ENCODE measurements at regions of chr1 and their contacts with region 1.

Region 1: GRCh38 chr1:67005068-67005467 is 48.9 kb downstream of the SLC35D1 start:
- DNase-seq: no peak
- H3K4me3 ChIP-seq: no peak overlapping the region
- H3K4me3 Mint-ChIP-seq: no peak overlapping the region
- H3K27ac ChIP-seq: no peak overlapping the region
- H3K27ac Mint-ChIP-seq: no peak overlapping the region
- H3K4me1 ChIP-seq: no peaks in the 10 kb centered on the region
- H3K4me1 Mint-ChIP-seq: no peaks in the 10 kb centered on the region
- H3K27me3 ChIP-seq: no peaks in the 10 kb centered on the region
- H3K27me3 Mint-ChIP-seq: no peaks in the 10 kb centered on the region
- CTCF ChIP-seq: no peak

Region 2: GRCh38 chr1:67041841-67042503 is 36.9 kb after region 1 on chr1:
- intact Hi-C with region 1: no loop called
- DNase-seq: no peak
- H3K4me3 ChIP-seq: no peak overlapping the region
- H3K4me3 Mint-ChIP-seq: no peak overlapping the region
- H3K27ac ChIP-seq: no peak overlapping the region
- H3K27ac Mint-ChIP-seq: no peak overlapping the region
- H3K4me1 ChIP-seq: no peaks in the 10 kb centered on the region
- H3K4me1 Mint-ChIP-seq: no peaks in the 10 kb centered on the region
- H3K27me3 ChIP-seq: no peaks in the 10 kb centered on the region
- H3K27me3 Mint-ChIP-seq: no peaks in the 10 kb centered on the region
- CTCF ChIP-seq: no peak

Region 3: DNA sequence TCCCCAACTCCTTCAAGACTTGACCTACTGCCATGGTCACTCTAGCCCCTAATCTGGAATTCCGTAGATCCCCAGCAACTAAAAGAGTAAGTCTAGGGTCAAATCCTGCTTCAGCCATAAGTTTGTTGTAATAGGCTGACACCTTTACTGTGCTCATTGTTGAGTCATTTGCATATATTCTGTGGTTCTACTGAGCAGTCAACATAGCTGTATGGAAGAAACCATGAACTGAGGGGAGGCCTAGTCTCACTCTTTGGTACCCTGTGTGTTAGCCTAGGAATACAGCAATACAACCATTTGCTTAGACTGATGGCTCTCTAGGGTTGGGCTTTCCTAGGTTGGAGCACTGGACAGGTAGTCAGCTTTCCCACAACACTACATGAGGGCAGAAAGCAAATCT is 72.5 kb after region 1 on chr1:
- intact Hi-C with region 1: no loop called
- DNase-seq: no peak
- H3K4me3 ChIP-seq: no peak overlapping the region
- H3K4me3 Mint-ChIP-seq: no peak overlapping the region
- H3K27ac ChIP-seq: no peak overlapping the region
- H3K27ac Mint-ChIP-seq: no peak overlapping the region
- H3K4me1 ChIP-seq: no peaks in the 10 kb centered on the region
- H3K4me1 Mint-ChIP-seq: no peaks in the 10 kb centered on the region
- H3K27me3 ChIP-seq: no peaks in the 10 kb centered on the region
- H3K27me3 Mint-ChIP-seq: peaks cover 0 to 4% (median 2%) of the 10 kb centered on the region in 3 donors
- CTCF ChIP-seq: no peak

Region 4: GRCh38 chr1:67162957-67163356 is 157.9 kb after region 1 on chr1:
- intact Hi-C with region 1: no loop called
- DNase-seq: no peak
- H3K4me3 ChIP-seq: no peak overlapping the region
- H3K4me3 Mint-ChIP-seq: no peak overlapping the region
- H3K27ac ChIP-seq: no peak overlapping the region
- H3K27ac Mint-ChIP-seq: no peak overlapping the region
- H3K4me1 ChIP-seq: no peaks in the 10 kb centered on the region
- H3K4me1 Mint-ChIP-seq: no peaks in the 10 kb centered on the region
- H3K27me3 ChIP-seq: no peaks in the 10 kb centered on the region
- H3K27me3 Mint-ChIP-seq: peaks cover 2 to 6% (median 5%) of the 10 kb centered on the region in 3 donors
- CTCF ChIP-seq: no peak

Region 5: GRCh38 chr1:67489643-67490042 is 484.6 kb after region 1 on chr1:
- intact Hi-C with region 1: no loop called
- DNase-seq: no peak
- H3K4me3 ChIP-seq: no peak overlapping the region
- H3K4me3 Mint-ChIP-seq: no peak overlapping the region
- H3K27ac ChIP-seq: no peak overlapping the region
- H3K27ac Mint-ChIP-seq: peak overlapping the region in 1 of 7 donors; percentile 16
- H3K4me1 ChIP-seq: no peaks in the 10 kb centered on the region
- H3K4me1 Mint-ChIP-seq: no peaks in the 10 kb centered on the region
- H3K27me3 ChIP-seq: no peaks in the 10 kb centered on the region
- H3K27me3 Mint-ChIP-seq: peaks cover 0 to 4% (median 0%) of the 10 kb centered on the region in 3 donors
- CTCF ChIP-seq: no peak

Region 6: DNA sequence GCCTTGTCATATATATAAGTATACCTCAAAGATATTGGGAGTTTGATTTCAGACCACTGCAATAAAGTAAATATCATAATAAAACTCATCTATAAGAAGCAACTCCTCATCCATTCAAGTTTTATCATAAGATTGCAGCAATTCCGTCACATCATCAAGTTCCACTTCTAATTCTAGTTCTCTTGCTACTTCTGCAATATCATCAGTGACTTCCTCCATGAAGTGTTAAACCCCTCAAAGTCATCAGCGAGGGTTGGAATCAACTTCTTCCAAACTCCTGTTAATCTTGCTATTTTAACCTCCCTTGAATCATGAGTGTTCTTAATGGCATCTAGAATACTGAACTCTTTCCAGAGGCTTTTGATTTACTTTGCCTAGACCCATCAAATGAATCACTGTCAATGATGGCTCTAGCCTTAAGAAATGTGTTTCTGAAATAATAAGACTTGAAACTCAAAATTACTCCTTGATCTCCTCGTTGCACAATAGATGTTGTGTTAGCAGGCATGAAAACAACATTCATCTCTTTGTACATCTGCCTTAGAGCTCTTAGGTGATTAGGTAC is 1356.4 kb after region 1 on chr1:
- intact Hi-C with region 1: loop called in 1 of 2 experiments (anchors 10 kb)
- DNase-seq: peak; percentile 40 to 59 (median 53)
- H3K4me3 ChIP-seq: peak overlapping the region in 1 of 3 experiments; percentile 13
- H3K4me3 Mint-ChIP-seq: no peak overlapping the region
- H3K27ac ChIP-seq: peak overlapping the region in 1 of 2 donors; percentile 47
- H3K27ac Mint-ChIP-seq: peak overlapping the region in 6 of 7 donors; percentile 7 to 83 (median 68)
- H3K4me1 ChIP-seq: peaks cover 41 to 46% of the 10 kb centered on the region in 2 donors
- H3K4me1 Mint-ChIP-seq: peaks cover 44% of the 10 kb centered on the region
- H3K27me3 ChIP-seq: no peaks in the 10 kb centered on the region
- H3K27me3 Mint-ChIP-seq: peaks cover 0 to 2% (median 0%) of the 10 kb centered on the region in 3 donors
- CTCF ChIP-seq: no peak